Vagina (tissue), 2 donors: ENCODE measurements at regions of chr4 and their contacts with region 1.

Region 1: DNA sequence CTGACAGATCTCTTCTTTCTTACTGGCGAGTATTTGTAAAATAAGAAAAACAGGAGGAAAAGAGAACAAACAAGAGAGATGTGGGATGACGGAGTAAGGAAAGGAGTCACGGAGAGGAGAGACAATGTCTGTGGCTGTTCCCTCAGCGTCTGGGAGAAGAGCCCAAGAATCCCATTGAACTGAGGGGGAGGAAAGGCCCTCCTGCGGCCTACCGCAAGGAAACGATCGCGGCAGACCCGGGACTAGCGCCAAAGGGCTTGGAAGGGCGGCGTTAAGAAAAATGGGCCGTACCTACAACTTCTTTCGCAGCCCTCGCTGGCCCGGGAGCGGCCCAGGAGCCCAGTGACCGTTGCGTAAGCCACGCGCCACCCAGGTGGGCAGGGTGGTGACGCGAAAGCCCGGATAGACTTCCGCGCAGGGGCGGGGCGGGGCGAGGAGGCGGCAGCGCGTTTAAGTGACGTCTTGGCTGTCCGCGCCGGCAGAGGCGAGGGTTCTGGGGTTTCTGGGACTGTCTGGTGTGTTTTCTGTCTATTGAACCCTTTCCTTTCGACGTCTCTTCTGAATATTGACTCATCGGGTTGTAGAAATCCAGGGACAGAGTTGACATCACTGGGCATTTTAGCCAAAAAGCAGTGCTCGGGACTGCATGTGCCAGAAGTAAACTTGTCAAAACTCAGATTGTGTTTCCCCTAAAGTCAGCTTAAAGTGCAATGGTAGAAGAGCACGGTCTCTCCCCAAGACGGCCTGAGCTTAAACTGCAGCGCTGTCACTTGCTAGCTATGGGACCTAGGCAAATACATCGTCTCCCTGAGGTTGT is at the start of gene SLC9B1:
- DNase-seq: peak in 1 of 2 donors; percentile 96
- H3K4me3 ChIP-seq: peak within 1 kb of the TSS; percentile 51 to 55
- H3K27ac ChIP-seq: peak within 1 kb of the TSS; percentile 93
- H3K4me1 ChIP-seq: peaks cover 10% of the 10 kb centered on the region
- H3K27me3 ChIP-seq: no peaks in the 10 kb centered on the region
- CTCF ChIP-seq: no peak
- POLR2A ChIP-seq: peak in 1 of 2 donors; percentile 70
- total RNA-seq, gene SLC9B1: not detected

Region 2: GRCh38 chr4:102620697-102621497 is 398.6 kb before region 1 on chr4:
- intact Hi-C with region 1: loop called (anchors 10 kb)
- DNase-seq: no peak
- H3K4me3 ChIP-seq: no peak overlapping the region
- H3K27ac ChIP-seq: no peak overlapping the region
- H3K4me1 ChIP-seq: no peaks in the 10 kb centered on the region
- H3K27me3 ChIP-seq: no peaks in the 10 kb centered on the region
- CTCF ChIP-seq: peak in 1 of 3 experiments; percentile 13
- POLR2A ChIP-seq: no peak